AG04450 (cell line): ENCODE measurements at regions of chr11 and their contacts with region 1.

Region 1: GRCh38 chr11:47373876-47374720 is 4.2 kb downstream of the SPI1 start:
- DNase-seq: peak; percentile 26
- H3K4me3 ChIP-seq: no peak overlapping the region
- H3K27ac ChIP-seq: no peak overlapping the region
- H3K27me3 ChIP-seq: no peaks in the 10 kb centered on the region
- CTCF ChIP-seq: peak; percentile 94

Region 2: GRCh38 chr11:47186076-47186936 is 187.8 kb before region 1 on chr11 and contains the start of gene PACSIN3:
- CTCF ChIA-PET with region 1: interaction called, 11 read pairs
- POLR2A ChIA-PET with region 1: no interaction called
- DNase-seq: no peak
- H3K4me3 ChIP-seq: peak within 1 kb of the TSS; percentile 67
- H3K27ac ChIP-seq: peak within 1 kb of the TSS; percentile 57
- H3K27me3 ChIP-seq: no peaks in the 10 kb centered on the region
- CTCF ChIP-seq: no peak
- polyA plus RNA-seq, gene PACSIN3: 15.3 and 19.7 TPM in 2 replicates

Region 3: GRCh38 chr11:47394322-47395222 is 20.5 kb after region 1 on chr11:
- CTCF ChIA-PET with region 1: interaction called, 31 read pairs
- POLR2A ChIA-PET with region 1: no interaction called
- DNase-seq: no peak
- H3K4me3 ChIP-seq: no peak overlapping the region
- H3K27ac ChIP-seq: no peak overlapping the region
- H3K27me3 ChIP-seq: no peaks in the 10 kb centered on the region
- CTCF ChIP-seq: no peak

Region 4: DNA sequence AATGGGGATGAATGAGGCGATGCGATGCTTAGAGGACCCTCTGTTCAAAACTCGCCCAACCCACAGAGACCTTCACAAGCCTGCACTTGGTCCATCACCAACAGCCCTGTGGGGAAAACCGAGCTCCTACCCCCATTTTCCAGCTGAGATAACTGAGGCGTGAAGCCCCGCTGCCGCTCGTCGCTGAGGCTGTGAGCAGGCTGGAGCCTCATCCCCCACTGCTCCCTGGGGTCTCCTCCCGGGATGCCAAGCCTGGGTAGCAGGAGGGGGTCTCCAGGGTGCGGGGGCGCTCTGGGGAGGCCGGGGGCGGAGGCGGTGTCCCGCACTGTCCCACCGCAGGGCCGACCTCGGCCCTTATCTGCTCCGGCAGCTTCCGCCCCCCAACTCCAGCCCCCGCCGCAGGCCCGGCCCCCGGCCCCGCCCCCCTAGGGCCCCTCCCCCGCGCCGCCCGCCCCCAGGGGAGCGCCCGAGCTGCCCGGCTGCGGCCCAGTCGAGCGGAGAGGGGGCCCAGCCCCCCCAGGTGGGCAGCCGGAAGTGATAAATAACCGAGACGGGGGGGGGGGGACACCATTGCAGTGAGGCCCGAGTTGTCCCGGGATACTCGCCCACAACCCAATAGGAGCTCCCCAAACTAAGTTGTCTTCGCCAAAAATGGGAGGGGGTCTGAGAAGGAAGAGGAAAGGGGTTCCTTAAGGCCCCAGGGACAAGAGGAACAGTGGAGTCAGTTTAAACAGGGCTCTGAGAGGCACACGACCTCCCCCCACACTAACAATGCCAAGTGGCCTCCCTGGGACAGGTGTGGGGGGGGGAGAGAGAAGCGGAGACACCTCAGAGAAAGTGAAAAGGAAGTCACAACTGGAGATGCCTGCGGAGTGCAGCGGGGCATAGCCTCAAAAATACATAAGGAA is 26.0 kb after region 1 on chr11:
- CTCF ChIA-PET with region 1: interaction called, 24 read pairs
- POLR2A ChIA-PET with region 1: no interaction called
- DNase-seq: no peak
- H3K4me3 ChIP-seq: peak overlapping the region; percentile 58
- H3K27ac ChIP-seq: no peak overlapping the region
- H3K27me3 ChIP-seq: no peaks in the 10 kb centered on the region
- CTCF ChIP-seq: no peak

Region 5: DNA sequence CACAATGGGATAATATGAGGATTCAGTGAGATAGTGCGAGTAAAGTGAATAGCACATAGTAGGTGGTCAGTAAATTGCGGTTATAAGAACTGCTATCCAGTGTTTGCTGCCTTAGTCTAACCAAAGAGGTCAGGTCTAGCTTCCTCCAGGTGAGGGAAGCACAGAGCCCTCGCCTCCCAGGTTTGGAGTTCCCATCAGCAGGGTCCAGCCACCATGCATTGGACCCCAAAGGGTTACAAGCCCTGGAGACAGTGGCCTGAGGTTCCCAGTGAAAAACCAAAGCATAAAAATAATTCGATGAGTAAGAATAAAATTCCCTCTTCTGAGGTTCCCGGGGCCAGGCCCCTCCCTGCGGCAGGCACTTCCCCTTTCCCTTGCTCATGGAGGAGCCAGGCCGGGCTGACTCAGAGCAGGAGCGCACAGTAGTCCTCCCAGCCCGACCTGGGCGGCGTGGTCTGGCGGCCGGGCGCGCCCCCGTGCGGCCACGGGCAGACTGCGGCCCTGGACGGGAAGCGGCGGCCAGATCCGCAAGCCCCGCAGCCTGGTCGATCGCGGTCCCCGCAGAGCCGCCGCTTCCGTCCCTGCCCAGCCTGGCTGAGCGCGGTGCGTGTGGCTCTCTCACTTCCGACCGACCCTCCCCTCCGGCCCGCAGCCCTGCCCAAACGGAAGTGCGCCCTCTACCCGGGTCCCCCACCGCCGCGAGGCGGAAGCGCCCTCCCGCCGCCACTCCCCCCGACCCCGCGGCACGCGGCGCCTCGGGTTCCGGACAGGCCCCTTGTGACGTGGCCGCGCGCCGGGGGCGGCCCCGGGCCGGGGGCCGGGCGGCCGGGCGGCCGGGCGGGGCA is 33.9 kb after region 1 on chr11 and contains the start of gene SLC39A13:
- CTCF ChIA-PET with region 1: interaction called, 26 read pairs
- POLR2A ChIA-PET with region 1: interaction called, 3 read pairs
- DNase-seq: peak; percentile 92
- H3K4me3 ChIP-seq: peak within 1 kb of the TSS; percentile 95
- H3K27ac ChIP-seq: peak within 1 kb of the TSS; percentile 99
- H3K27me3 ChIP-seq: no peaks in the 10 kb centered on the region
- CTCF ChIP-seq: peak; percentile 61
- polyA plus RNA-seq, gene SLC39A13: 54.4 and 65.9 TPM in 2 replicates

Region 6: DNA sequence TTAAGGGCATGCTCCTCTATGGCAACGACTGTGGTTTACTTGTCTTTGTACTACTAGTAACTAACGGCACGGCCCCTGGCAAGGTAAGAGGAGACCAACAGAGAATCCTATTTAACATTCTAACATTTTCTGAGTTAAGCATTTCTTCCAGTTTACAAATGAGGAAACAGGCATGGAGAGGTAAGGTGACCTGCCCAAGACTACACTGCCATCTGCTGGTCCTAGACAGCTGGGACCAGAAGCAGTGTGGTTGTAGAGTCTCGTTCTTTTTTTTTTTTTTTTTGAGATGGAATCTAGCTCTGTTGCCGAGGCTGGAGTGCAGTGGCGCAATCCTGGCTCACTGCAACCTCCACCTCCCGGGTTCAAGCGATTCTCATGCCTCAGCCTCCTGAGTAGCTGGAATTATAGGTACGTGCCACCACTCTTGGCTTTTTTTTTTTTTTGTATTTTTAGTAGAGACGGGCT is 80.1 kb after region 1 on chr11:
- CTCF ChIA-PET with region 1: interaction called, 26 read pairs
- POLR2A ChIA-PET with region 1: interaction called, 3 read pairs
- DNase-seq: peak; percentile 72
- H3K4me3 ChIP-seq: no peak overlapping the region
- H3K27ac ChIP-seq: no peak overlapping the region
- H3K27me3 ChIP-seq: no peaks in the 10 kb centered on the region
- CTCF ChIP-seq: peak; percentile 87

Region 7: DNA sequence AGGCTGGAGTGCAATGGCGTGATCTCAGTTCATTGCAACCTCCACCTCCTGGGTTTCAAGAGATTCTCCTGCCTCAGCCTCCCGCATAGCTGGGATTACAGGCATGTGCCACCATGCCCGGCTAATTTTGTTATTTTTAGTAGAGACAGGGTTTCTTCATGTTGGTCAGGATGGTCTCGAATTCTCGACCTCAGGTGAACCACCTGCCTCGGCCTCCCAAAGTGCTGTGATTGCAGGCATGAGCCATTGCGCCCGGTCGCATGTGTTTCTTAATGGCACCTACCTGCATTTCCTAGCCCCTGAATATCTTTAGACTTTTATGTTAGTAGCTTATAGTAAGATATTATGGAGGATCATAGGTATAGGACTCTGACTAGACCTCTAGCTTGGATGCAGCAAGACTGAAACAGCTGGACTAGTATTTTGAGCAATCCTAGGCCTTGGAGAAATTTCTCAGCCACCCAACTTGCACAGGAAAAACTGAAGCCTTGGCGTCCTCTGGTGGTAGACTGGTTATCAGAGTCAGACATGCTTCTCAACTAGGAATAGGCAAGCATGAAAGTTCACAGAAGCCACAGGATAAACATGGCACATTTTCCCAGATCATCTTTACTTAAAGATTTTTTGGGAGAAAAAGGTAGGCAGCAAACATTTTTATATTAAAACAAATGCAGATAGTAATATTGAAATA is 242.8 kb after region 1 on chr11:
- CTCF ChIA-PET with region 1: interaction called, 39 read pairs
- POLR2A ChIA-PET with region 1: no interaction called
- DNase-seq: peak; percentile 69
- H3K4me3 ChIP-seq: no peak overlapping the region
- H3K27ac ChIP-seq: no peak overlapping the region
- H3K27me3 ChIP-seq: no peaks in the 10 kb centered on the region
- CTCF ChIP-seq: peak; percentile 99